ENCODE measurements at regions of chr10 and their contacts with region 1.

Region 1: DNA sequence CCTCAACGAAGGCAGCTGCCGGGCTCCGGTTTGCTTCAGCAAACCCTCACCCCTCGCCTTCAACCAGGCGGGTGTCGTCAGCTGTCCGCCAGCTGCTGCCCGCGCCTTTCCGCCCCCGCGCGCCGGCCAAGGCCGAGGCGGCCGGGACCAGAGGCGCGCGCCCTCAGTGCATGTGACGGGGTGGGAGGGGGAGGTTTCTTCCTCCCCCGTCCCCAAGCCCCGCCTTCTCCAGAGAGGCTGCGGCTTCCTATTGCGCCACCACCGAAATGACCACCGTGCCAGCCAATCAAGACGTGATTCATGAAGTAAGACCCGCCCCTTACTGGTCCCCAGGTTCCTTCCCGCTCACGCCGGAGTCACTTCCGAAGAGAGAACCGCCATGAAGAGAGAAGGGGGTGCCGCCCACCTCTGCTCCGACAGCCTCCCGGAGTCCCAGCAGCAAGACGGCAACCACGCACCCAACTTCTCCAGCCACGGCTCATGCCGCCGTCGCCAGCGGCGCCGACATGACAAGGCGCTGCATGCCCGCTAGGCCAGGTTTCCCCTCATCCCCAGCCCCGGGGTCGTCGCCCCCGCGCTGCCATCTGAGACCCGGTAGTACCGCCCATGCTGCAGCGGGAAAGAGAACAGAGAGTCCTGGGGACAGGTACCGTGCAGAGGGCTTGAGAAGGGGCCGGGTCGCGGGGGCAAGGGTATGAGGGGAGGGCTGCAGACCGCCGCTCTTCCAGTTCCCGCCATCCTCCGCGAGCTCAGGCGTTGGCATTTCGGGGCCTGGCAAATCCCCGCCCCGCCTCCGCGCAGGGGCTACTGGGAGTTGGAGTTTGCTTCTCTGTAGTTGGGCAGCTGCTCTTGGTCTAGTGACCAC is at the start of gene SLF2:
- DNase-seq: peak; percentile 96 to 100 (median 98)

Region 2: GRCh38 chr10:100986952-100987750 is 74.3 kb after region 1 on chr10 and contains the starts of genes MRPL43 and TWNK:
- intact Hi-C with region 1: loop called (anchors 10 kb)
- DNase-seq: peak; percentile 87 to 99 (median 91)

Region 3: GRCh38 chr10:101438881-101439391 is 526.1 kb after region 1 on chr10:
- intact Hi-C with region 1: no loop called
- DNase-seq: no peak

Measured in posterior cingulate gyrus (tissue), 11 donors.